Colonic mucosa (tissue), 4 donors: ENCODE measurements at regions of chr17 and their contacts with region 1.

Region 1: DNA sequence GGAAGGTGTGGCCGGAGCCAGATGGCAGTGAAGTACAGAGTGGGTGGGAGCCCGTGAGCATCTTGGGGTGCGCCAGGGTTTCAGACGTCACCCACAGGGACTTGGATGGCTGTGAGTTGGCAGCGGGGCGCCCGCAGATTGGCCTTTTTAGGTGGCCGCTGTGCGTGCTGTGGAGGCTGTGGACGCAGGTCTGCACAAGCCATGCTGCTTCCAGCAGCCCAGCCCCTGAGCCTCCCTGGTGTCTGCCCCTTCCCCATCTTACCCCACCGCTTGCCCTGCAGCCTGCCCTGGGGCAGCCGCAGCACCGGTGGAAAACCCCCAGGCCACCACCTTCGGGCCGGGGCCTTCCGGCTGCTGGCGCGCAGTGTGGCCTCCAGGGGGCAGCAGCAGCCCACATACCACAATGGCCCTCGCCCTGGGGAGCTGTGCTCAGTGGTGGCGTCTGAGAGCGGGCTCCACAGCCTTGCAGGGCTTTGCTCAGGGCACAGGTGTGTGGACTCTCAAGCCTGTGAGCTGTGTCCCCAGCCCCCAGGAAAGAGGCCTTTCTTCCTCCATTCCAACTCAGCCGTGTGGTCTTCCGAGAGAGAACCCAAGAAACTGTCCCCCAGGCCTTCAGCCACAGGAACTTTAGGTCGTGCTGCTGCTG is 11.8 kb downstream of the ENDOV start:
- DNase-seq: peak; percentile 66
- H3K4me3 ChIP-seq: no peak overlapping the region
- H3K27ac ChIP-seq: no peak overlapping the region
- H3K4me1 ChIP-seq: no peaks in the 10 kb centered on the region
- H3K27me3 ChIP-seq: no peaks in the 10 kb centered on the region
- CTCF ChIP-seq: peak; percentile 98

Region 2: GRCh38 chr17:80408872-80409271 is 17.9 kb before region 1 on chr17:
- intact Hi-C with region 1: no loop called
- DNase-seq: no peak
- H3K4me3 ChIP-seq: no peak overlapping the region
- H3K27ac ChIP-seq: no peak overlapping the region
- H3K4me1 ChIP-seq: no peaks in the 10 kb centered on the region
- H3K27me3 ChIP-seq: no peaks in the 10 kb centered on the region
- CTCF ChIP-seq: no peak

Region 3: GRCh38 chr17:80575057-80575875 is 148.5 kb after region 1 on chr17:
- intact Hi-C with region 1: loop called (anchors 5 kb)
- DNase-seq: peak; percentile 92
- H3K4me3 ChIP-seq: no peak overlapping the region
- H3K27ac ChIP-seq: no peak overlapping the region
- H3K4me1 ChIP-seq: no peaks in the 10 kb centered on the region
- H3K27me3 ChIP-seq: no peaks in the 10 kb centered on the region
- CTCF ChIP-seq: peak; percentile 100

Region 4: DNA sequence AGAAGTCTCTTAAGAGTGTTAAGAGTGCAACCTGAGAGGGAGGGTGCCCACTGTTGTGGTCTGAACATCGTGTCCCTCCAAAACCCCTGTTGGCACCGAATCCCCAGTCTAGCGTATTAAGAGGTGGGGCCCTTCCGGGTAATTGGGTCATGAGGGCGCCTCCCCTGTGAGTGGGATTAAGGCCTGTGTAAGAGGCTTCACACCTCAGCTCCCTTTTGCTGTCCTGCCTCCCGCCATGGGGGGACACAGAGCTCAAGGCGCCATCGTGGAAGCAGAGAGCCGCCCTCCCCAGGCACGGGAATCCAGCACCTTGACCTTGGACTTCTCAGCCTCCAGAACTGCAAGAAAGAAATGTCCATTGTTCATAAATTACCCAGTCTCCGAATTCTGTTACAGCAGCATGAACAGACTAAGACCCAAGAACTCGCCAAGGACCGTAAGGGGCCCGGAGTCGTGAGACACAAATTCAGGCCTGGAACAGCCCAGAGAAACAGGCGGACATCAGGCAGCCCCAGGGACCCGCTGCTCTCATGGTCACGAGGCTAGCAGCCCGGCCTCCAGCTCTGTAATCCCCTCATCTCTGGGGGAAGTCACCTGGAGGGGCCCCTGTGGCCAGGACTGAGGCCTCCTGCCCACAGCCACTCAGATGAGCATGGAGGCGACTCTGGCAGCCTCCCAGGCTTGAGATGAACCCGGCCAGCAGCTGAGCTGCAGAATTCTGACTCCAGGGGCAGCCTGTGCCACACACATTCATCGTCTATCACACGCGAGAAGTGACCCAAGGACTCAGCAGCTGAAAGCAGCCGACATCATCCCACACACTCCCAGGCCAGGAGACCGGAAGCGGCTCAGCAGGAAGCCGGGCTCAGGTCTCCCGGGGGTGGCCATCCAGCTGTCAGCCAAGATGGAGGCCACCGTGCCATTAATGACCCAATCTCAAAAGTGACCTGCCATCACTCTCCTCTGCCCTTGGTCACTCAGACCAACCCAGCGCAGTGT is 552.0 kb after region 1 on chr17:
- intact Hi-C with region 1: loop called (anchors 2 kb)
- DNase-seq: no peak
- H3K4me3 ChIP-seq: no peak overlapping the region
- H3K27ac ChIP-seq: no peak overlapping the region
- H3K4me1 ChIP-seq: no peaks in the 10 kb centered on the region
- H3K27me3 ChIP-seq: peaks cover 10% of the 10 kb centered on the region
- CTCF ChIP-seq: no peak

Region 5: GRCh38 chr17:81101614-81102306 is 675.0 kb after region 1 on chr17:
- intact Hi-C with region 1: loop called (anchors 10 kb)
- DNase-seq: peak; percentile 84
- H3K4me3 ChIP-seq: no peak overlapping the region
- H3K27ac ChIP-seq: no peak overlapping the region
- H3K4me1 ChIP-seq: peaks cover 11% of the 10 kb centered on the region
- H3K27me3 ChIP-seq: no peaks in the 10 kb centered on the region
- CTCF ChIP-seq: peak; percentile 100